ENCODE measurements at regions of chr9 and their contacts with region 1.

Region 1: DNA sequence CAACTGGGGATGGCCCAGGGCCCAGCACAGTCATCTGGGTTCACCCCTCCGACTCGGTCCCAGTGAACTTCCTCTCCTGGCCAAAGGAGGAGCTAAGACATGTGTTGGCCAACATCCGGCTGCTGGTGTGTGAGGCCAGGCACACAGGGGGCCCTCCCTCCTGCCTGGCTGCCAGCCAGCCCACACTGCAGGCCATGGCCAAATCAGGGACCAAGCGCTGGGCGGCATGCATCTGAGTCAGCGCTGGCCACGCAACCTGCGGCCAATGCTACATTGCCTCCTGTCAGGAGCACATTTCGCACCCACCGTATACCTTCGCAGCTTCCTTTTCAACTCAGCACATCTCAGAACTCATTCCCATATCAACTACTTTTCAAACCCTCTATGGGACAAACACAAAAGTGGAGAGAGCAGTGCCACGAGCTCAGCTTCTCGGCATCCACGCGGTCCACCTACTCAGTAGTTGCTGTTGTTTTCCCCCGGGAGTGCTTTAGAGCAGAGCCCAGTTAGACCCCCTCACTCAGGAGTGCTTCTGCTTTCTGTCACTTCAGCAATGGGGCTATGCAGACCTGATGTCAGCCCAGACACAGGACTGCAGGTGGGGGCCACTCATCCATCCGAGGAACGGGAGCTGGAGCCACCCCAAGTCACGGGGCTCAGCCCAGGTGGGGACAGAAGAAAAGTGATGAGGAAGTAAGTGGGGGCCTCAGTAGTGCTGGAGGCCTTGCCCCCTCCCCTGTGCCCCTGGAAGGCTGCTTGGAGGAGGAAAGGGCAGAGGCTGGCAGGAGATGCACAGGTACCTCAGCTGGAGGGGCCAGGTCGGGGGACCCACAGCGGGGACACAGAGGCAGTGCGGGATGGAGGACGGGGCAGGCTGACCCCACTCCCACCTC is 13.9 kb downstream of the NINJ1 start:
- DNase-seq: peak; percentile 99
- H3K4me3 Mint-ChIP-seq: peak overlapping the region; percentile 45
- H3K27ac Mint-ChIP-seq: peak overlapping the region; percentile 94
- H3K4me1 Mint-ChIP-seq: peaks cover 22% of the 10 kb centered on the region
- H3K27me3 Mint-ChIP-seq: no peaks in the 10 kb centered on the region
- CTCF ChIP-seq: peak; percentile 29

Region 2: DNA sequence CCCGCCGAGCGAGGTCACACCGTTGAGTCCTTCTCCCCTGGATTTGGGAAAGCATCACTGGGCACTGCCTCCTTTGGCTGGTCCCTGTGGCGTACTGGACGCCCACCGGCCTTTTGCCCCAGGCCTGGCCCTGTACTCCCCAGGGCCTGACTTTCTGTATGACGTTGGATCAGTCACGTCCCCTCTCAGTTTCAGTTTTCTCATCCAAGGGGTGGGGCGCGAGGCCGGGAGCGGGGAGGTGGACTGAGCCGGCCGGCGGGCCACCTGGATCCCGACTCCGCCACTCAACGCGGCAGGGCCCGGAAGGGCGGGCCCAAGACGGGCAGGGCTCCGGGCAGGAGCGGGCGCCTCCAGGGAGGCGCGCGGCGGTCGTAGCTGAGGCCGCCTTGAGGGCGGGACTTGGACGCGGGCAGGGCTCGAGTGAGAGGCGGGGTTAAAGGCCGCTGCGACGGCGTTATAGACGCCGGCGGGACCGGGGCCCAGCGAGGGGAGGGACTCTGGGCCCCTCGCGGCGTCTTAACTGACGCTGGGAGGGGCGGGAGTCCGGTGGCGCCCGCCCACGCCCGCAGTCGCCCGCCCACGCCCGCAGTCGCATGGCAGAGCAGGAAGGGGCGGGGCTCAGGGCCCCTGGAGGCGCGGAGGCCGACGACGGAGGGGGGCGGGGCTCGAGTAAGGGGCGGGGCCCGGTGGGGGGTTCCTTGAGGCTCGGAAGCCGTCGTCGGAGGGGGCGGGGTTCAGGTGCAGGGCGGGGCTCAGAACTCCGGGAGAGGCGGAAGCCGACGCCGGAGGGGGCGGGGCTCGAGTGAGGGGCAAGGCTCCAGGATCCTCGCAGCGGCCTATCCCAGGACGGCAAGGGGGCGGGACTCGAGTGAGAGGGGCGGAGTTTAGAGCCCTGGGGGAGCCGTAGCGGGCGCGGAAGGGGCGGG is 24.7 kb before region 1 on chr9:
- CTCF ChIA-PET with region 1: interaction called, 6 read pairs
- POLR2A ChIA-PET with region 1: interaction called, 23 read pairs
- intact Hi-C with region 1: no loop called
- DNase-seq: peak; percentile 98
- H3K4me3 Mint-ChIP-seq: peak overlapping the region; percentile 78
- H3K27ac Mint-ChIP-seq: peak overlapping the region; percentile 82
- H3K4me1 Mint-ChIP-seq: peaks cover 33% of the 10 kb centered on the region
- H3K27me3 Mint-ChIP-seq: no peaks in the 10 kb centered on the region
- CTCF ChIP-seq: no peak

Region 3: GRCh38 chr9:93620878-93621820 is 500.9 kb after region 1 on chr9:
- CTCF ChIA-PET with region 1: no interaction called
- POLR2A ChIA-PET with region 1: no interaction called
- intact Hi-C with region 1: no loop called
- DNase-seq: peak; percentile 23
- H3K4me3 Mint-ChIP-seq: no peak overlapping the region
- H3K27ac Mint-ChIP-seq: no peak overlapping the region
- H3K4me1 Mint-ChIP-seq: no peaks in the 10 kb centered on the region
- H3K27me3 Mint-ChIP-seq: no peaks in the 10 kb centered on the region
- CTCF ChIP-seq: no peak

Measured in MCF 10A (cell line).